ENCODE measurements at regions of chr6 and their contacts with region 1.

Region 1: GRCh38 chr6:138817822-138818308 is 22.0 kb downstream of the ECT2L start:
- DNase-seq: no peak

Region 2: GRCh38 chr6:138869398-138869797 is 51.5 kb after region 1 on chr6:
- intact Hi-C with region 1: no loop called
- DNase-seq: no peak

Region 3: DNA sequence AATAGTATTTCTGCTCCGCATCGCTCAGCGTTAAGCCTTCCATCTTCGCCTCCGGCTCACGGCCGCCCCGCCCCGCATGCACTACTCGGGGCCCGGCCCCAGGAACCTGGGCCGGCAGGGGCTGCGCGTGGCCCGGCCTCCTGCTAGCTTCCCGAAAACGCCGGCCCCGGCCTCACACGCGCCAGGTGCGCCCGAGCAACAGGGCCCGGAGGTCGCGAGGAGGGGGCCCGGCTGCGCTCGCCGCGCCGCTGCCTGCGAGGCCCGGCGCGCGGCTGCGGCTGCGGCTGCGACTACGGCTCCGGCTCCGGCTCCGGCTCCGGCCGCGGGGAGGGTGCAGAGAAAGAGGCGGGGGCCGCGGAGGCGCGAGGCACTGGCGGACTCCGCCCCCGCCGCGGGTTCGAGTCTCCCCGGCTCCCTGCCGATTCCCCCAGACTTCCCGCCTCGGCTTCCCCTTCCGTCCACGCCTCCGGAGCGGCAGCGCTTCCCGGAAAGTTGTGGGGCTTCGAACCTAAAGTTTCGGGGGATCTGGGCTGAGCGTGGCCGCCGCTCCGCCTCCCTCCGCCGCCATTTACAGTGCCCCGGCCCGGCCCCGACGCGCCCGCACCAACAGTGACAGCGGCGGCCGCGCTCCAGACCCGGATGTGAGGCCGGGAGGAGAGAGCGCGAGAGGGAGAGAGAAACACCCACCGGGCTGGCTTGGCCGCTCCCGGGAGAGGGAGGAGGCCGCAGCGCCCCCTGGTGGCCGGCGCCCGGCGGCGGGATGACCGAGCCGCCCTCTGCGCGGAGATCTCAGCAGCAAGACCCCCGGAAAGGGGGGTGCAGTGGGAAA is 170.0 kb after region 1 on chr6 and contains the start of gene REPS1:
- intact Hi-C with region 1: loop called in 1 of 2 experiments (anchors 5 kb)
- DNase-seq: peak; percentile 97
- total RNA-seq, gene REPS1: 28.5 to 28.7 TPM

Region 4: DNA sequence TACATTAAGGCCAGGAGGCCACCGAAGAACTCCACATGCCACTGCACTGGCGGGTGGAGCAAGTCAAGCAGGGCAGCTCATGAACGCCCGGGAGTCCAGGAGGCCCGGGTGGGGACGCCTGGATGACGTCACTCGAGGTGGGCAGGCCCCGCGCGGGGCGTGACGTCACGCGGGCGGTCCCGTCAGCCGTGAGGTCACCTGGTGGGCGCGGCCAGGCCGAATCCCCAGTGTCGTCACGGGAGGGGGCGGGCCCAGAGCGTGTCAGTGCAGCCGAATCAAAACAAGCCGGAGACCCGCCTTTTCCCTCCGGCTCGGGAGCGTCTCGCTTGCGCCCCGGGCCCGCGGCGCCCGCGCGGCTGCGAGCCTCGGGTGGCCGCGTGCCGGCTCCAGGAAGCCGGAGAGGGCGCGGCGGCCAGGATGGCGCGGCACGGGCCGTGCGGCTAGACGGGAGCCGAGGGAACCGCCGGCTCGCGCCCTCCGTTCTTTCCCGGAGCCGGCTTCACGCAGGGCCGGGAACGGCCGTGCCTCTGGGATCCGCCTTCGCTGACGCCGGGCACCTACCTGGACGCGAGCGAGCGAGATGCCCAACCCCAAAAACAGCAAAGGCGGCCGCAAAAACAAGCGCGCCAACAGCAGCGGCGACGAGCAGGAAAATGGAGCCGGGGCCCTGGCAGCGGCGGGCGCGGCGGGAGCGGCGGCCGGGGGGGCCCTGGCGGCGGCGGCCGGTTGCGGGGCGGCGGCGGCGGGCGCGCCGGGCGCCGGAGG is 317.1 kb after region 1 on chr6 and contains the start of gene HECA:
- intact Hi-C with region 1: loop called in 1 of 2 experiments (anchors 10 kb)
- DNase-seq: peak; percentile 99
- total RNA-seq, gene HECA: 23.3 to 40.4 TPM

Region 5: DNA sequence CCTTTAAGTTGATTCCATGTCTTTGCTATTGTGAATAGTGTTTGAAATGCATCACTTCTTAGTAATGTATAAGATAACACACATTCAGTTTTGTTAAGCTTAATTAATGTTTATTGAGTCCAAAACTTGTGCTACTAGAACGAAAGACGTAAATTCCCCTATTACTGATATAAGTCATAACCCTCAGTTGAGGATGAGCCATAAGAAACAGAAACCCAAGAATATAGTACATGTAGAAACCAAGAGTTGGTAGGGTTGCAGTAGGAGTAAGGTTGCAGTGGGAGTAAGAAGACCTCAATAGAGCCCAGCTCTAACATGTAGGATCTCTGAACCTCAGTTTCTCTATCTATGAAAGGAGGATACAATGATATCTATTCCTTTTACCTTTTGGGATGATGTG is 537.3 kb after region 1 on chr6:
- intact Hi-C with region 1: loop called in 1 of 2 experiments (anchors 10 kb)
- DNase-seq: no peak

Measured in posterior vena cava (tissue), 2 donors.